Left colon (tissue), 2 donors: ENCODE measurements at regions of chr1 and their contacts with region 1.

Region 1: DNA sequence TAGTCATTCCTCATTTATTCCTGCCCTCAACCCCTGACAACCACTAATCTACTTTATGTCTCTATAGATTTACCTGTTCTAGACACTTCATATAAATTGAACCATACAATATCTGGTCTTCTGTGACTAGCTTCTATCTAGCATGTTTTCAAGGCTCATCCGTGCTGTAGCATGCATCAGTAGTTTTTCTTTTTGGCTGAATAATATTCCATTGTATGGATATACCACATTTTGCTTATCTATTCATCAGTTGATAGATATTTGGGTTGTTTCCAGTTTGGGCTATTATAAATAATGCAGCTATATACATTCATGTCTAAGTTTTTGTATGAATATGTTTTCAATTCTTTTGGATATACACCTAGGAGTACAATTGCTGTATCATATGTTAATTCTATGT is 101.5 kb downstream of the HFM1 start:
- DNase-seq: no peak
- ATAC-seq: no peak

Region 2: DNA sequence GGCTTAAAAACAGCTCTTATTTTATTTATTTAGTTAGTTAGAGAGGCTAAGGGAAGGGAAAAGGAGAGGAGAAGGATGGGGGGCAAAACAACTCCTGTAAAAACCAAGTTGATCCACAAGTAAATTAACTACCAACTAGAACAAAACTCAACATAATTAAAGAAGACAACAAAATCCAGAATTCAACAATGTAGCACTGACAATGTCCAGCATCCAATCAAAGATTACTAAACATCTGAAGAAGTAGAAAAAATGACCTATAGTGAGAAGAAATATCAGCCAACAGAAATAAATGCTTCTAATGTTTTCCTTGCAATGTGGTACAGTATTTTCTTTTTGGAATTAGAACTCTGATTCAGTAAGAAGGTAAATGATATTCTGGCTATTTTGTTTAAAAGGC is 357.5 kb after region 1 on chr1:
- intact Hi-C with region 1: loop called in 1 of 2 experiments (anchors 5 kb)
- DNase-seq: no peak
- ATAC-seq: no peak